PC-9 (cell line): ENCODE measurements at regions of chr6 and their contacts with region 1.

Region 1: DNA sequence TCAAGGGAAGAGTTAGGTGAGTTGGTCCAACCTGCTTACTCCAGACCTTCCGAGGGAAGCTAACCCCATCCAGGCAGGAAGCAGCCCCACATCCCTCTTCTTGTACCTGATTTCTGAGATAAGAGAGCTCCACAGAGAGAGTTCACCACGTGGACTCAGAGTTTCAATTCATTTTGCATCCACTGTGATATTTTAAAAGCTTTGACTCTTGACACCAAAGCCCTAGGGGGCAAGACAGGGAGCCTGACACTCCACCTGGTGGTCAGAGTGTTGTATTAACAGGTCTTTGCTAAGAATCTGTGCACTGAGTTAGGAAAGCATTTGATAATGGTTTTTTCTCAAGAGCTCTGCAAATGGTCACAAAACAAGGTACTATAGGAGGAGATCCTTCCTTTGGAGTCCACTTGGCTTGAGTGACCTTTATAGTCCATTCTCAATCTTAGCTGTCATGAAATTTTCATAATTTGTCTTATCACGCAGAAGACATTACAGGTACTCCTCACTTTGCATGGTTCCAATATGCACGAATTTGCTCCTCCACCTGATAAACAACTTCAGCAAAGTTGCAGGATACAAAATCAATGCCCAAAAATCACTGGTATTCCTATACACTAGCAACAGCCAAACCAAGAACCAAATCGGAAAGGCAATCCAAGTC is 56.2 kb upstream of the RIPOR2 start:
- DNase-seq: peak in 1 of 2 experiments; percentile 42
- H3K4me3 ChIP-seq: no peak overlapping the region
- H3K27ac ChIP-seq: no peak overlapping the region
- H3K4me1 ChIP-seq: peaks cover 11% of the 10 kb centered on the region
- H3K27me3 ChIP-seq: no peaks in the 10 kb centered on the region
- CTCF ChIP-seq: peak; percentile 86

Region 2: GRCh38 chr6:24472177-24472576 is 519.8 kb before region 1 on chr6:
- CTCF ChIA-PET with region 1: no interaction called
- POLR2A ChIA-PET with region 1: interaction called, 16 read pairs
- intact Hi-C with region 1: no loop called
- DNase-seq: peak in 1 of 2 experiments; percentile 88
- H3K4me3 ChIP-seq: peak overlapping the region; percentile 10; the same call in 1 of the 2 replicates
- H3K27ac ChIP-seq: peak overlapping the region; percentile 93
- H3K4me1 ChIP-seq: peaks cover 25% of the 10 kb centered on the region
- H3K27me3 ChIP-seq: no peaks in the 10 kb centered on the region
- CTCF ChIP-seq: no peak

Region 3: DNA sequence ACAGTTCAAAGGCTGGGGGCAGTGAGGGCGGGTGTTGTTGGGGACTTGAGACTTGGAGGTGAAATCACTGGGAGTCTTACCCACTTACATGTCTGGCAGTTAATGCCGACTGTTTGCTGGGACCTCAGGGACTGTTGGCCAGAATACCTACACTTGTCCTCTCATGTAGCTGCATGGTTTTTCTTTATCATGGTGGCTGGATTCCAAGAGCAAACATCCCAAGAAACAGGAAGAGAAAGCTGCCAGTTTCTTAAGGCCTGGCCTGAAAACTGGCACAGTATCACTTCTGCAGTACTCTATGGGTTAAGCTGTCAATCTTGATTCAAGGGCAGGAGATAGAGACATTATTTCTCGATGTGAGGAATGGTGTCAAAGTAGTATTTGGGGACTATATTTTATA is 253.2 kb before region 1 on chr6:
- CTCF ChIA-PET with region 1: no interaction called
- POLR2A ChIA-PET with region 1: no interaction called
- intact Hi-C with region 1: no loop called
- DNase-seq: no peak
- H3K4me3 ChIP-seq: no peak overlapping the region
- H3K27ac ChIP-seq: no peak overlapping the region
- H3K4me1 ChIP-seq: peaks cover 17% of the 10 kb centered on the region
- H3K27me3 ChIP-seq: no peaks in the 10 kb centered on the region
- CTCF ChIP-seq: no peak

Region 4: DNA sequence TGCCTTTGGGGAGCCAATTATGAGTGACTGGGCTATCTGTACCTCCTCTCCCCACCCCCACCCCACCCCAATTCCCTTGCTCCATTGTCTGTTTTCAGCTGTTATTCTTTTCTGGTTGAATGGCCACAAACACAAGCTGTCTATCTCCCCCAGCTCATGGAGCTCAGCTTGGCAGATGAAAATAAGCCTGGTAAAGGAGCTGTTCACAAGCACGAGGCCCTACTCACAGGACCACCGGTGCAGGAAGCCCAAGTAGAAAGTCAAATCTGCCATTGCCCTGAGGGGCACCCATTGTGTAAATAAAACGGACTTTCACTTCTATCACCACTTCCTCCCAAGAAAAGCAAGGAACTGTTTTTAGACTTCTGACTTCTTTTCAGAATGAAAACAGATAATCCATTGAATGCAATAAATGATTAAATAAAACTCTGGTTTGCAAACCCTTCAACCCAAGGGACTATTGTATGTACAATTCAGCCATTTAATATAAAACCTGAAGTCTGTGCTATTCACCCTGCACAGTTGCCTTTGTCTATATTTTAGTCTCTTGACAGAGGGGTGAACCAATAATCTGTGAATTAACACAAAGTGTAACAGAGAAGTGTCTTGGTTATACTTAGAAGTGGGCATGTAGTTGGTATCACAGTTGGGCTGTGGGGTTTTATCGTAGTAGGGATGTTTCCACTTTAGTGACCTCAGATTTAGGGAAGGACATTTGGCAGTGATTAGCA is 83.9 kb before region 1 on chr6:
- CTCF ChIA-PET with region 1: interaction called, 5 read pairs
- POLR2A ChIA-PET with region 1: interaction called, 18 read pairs
- intact Hi-C with region 1: no loop called
- DNase-seq: no peak
- H3K4me3 ChIP-seq: no peak overlapping the region
- H3K27ac ChIP-seq: no peak overlapping the region
- H3K4me1 ChIP-seq: peaks cover 15% of the 10 kb centered on the region; the same call in 1 of the 2 replicates
- H3K27me3 ChIP-seq: peaks cover 21% of the 10 kb centered on the region
- CTCF ChIP-seq: no peak

Region 5: GRCh38 chr6:24974182-24975171 is 17.5 kb before region 1 on chr6:
- CTCF ChIA-PET with region 1: no interaction called
- POLR2A ChIA-PET with region 1: no interaction called
- intact Hi-C with region 1: loop called (anchors 1 kb)
- DNase-seq: peak in 1 of 2 experiments; percentile 68
- H3K4me3 ChIP-seq: no peak overlapping the region
- H3K27ac ChIP-seq: no peak overlapping the region
- H3K4me1 ChIP-seq: peaks cover 13% of the 10 kb centered on the region
- H3K27me3 ChIP-seq: no peaks in the 10 kb centered on the region
- CTCF ChIP-seq: no peak

Region 6: GRCh38 chr6:25006565-25007001 is 14.6 kb after region 1 on chr6:
- CTCF ChIA-PET with region 1: interaction called, 20 read pairs
- POLR2A ChIA-PET with region 1: no interaction called
- intact Hi-C with region 1: no loop called
- DNase-seq: peak; percentile 67 to 92
- H3K4me3 ChIP-seq: no peak overlapping the region
- H3K27ac ChIP-seq: peak overlapping the region; percentile 69
- H3K4me1 ChIP-seq: peaks cover 49% of the 10 kb centered on the region
- H3K27me3 ChIP-seq: no peaks in the 10 kb centered on the region
- CTCF ChIP-seq: no peak